Panc1 (cell line): ENCODE measurements at regions of chrX and their contacts with region 1.

Region 1: GRCh38 chrX:133444951-133445831 is 29.9 kb upstream of the GPC4 start:
- DNase-seq: no peak
- ATAC-seq: no peak; the same call in none of the 2 replicates
- H3K4me3 ChIP-seq: peak overlapping the region; percentile 11 to 14; a peak in 3 of 4 replicates
- H3K27ac ChIP-seq: no peak overlapping the region
- H3K4me1 ChIP-seq: no peaks in the 10 kb centered on the region
- H3K27me3 ChIP-seq: peaks cover 2% of the 10 kb centered on the region; the same call in 1 of the 2 replicates
- CTCF ChIP-seq: no peak

Region 2: GRCh38 chrX:133151336-133151735 is 293.9 kb before region 1 on chrX:
- CTCF ChIA-PET with region 1: no interaction called
- POLR2A ChIA-PET with region 1: interaction called, 14 read pairs
- in situ Hi-C with region 1: no loop called
- intact Hi-C with region 1: no loop called
- DNase-seq: no peak
- ATAC-seq: no peak
- H3K4me3 ChIP-seq: no peak overlapping the region
- H3K27ac ChIP-seq: no peak overlapping the region
- H3K4me1 ChIP-seq: no peaks in the 10 kb centered on the region
- H3K27me3 ChIP-seq: no peaks in the 10 kb centered on the region
- CTCF ChIP-seq: no peak

Region 3: DNA sequence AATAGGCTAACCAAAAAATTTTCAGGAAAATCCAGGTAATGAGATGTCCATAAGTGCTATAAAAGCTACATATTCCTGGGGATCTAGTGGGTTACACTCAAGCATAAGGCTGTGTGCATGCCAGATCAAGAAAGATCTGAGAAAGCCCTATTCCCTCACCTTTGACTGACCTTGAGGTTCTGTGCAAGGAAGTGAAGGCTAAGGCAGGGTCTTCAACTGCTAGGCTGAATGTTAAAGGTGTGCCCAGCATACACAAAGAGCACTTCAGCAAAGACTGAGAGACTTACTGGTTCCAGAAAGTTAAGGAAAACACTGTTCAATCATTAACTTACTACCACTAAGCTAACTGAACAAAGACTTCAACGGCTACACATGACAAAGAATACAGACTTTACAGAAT is 270.5 kb after region 1 on chrX:
- CTCF ChIA-PET with region 1: no interaction called
- POLR2A ChIA-PET with region 1: no interaction called
- in situ Hi-C with region 1: no loop called
- intact Hi-C with region 1: no loop called
- DNase-seq: no peak
- ATAC-seq: no peak
- H3K4me3 ChIP-seq: no peak overlapping the region
- H3K27ac ChIP-seq: no peak overlapping the region
- H3K4me1 ChIP-seq: no peaks in the 10 kb centered on the region
- H3K27me3 ChIP-seq: no peaks in the 10 kb centered on the region
- CTCF ChIP-seq: no peak

Region 4: GRCh38 chrX:135006187-135006586 is 1561.0 kb after region 1 on chrX:
- CTCF ChIA-PET with region 1: no interaction called
- POLR2A ChIA-PET with region 1: interaction called, 18 read pairs
- in situ Hi-C with region 1: no loop called
- intact Hi-C with region 1: no loop called
- DNase-seq: no peak
- ATAC-seq: no peak
- H3K4me3 ChIP-seq: no peak overlapping the region
- H3K27ac ChIP-seq: no peak overlapping the region
- H3K4me1 ChIP-seq: peaks cover 8% of the 10 kb centered on the region
- H3K27me3 ChIP-seq: no peaks in the 10 kb centered on the region; the same call in 1 of the 2 replicates
- CTCF ChIP-seq: no peak